ENCODE measurements at regions of chr18 and their contacts with region 1.

Region 1: DNA sequence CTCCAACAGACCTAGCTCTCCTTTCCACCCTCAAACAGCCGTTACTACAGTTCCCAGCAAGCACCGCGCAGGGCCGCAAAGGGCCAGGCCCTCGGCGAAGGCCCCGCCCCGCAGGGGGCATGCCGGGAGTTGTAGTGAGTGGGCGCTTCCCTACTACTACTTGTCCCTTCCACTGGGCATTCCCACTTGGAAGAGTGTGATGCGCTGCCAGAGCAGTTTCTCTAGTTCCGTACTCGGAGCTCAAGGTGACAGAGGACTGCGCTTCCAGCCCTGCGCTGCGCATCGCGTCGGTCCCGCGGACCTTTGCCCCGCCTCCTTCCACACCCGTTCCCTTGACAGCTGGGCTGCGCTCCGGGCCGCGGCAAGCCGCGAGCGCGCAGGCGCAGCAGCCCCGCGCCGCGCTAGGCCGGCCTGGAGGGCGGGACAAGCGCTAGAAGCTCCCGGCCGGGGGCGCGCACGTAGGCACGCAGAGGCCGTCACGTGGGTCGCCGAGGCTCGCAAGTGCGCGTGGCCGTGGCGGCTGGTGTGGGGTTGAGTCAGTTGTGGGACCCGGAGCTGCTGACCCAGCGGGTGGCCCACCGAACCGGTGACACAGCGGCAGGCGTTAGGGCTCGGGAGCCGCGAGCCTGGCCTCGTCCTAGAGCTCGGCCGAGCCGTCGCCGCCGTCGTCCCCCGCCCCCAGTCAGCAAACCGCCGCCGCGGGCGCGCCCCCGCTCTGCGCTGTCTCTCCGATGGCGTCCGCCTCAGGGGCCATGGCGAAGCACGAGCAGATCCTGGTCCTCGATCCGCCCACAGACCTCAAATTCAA is at the start of gene VAPA:
- DNase-seq: peak; percentile 86 to 99 (median 93)
- ATAC-seq: peak; percentile 82
- H3K4me3 ChIP-seq: peak within 1 kb of the TSS; percentile 82 to 99
- H3K4me3 Mint-ChIP-seq: peak within 1 kb of the TSS; percentile 92
- H3K27ac ChIP-seq: peak within 1 kb of the TSS; percentile 88 to 94
- H3K27ac Mint-ChIP-seq: peak within 1 kb of the TSS; percentile 96
- H3K4me1 ChIP-seq: peaks cover 41% of the 10 kb centered on the region
- H3K4me1 Mint-ChIP-seq: peaks cover 26% of the 10 kb centered on the region
- H3K27me3 ChIP-seq: no peaks in the 10 kb centered on the region
- H3K27me3 Mint-ChIP-seq: no peaks in the 10 kb centered on the region
- CTCF ChIP-seq: no peak
- total RNA-seq, gene VAPA: 169 to 177 TPM

Region 2: DNA sequence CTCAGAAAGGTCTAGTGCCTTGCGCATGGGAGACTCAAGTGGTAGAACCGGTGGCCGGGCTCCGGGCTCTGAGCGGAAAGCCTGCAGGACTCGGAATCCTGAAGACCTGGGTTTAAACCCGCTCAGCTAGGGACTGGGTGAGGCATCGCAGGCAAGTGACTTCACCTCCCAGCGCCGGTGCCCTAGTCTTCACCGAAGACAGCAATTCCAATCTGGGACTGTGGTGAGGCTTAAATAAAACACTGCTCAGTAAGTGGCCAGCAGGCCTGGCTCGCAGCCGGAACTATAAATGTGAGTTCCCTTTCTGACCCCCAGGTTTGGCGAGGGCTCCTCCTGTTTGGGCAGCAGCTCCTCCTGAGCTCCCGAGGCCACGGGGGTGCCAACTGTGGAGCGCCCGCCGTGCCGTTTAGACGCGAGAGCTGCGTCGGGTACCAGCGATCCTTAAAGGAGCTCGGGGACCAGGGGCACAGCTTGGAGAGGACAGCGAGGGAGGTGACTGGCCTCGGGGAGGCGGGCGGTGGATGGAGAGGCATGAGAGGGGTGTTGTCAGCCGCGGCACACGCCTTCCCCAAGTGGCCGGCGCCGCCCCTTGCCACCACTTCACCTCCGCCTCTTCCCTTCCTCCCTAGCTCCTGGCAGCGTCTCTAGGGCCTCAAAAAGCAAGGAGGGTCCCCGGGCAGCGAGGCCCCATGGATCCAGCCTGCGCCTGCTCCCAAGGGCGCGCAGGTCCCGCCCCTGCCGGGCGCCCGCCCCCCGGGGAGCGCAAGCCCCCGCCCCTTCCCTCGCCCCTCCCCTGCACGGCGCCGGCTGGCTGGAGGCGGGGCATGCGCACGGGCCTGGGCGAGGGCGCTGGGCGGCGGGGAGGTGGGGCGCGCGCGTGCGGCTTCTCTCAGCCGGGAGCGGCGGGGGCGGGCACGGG is 1209.1 kb before region 1 on chr18:
- CTCF ChIA-PET with region 1: no interaction called
- POLR2A ChIA-PET with region 1: no interaction called
- intact Hi-C with region 1: loop called (anchors 10 kb)
- DNase-seq: peak; percentile 59 to 91 (median 84)
- ATAC-seq: peak; percentile 95
- H3K4me3 ChIP-seq: peak overlapping the region; percentile 73
- H3K4me3 Mint-ChIP-seq: peak overlapping the region; percentile 89
- H3K27ac ChIP-seq: no peak overlapping the region
- H3K27ac Mint-ChIP-seq: no peak overlapping the region
- H3K4me1 ChIP-seq: peaks cover 15% of the 10 kb centered on the region
- H3K4me1 Mint-ChIP-seq: peaks cover 17% of the 10 kb centered on the region
- H3K27me3 ChIP-seq: peaks cover 16 to 24% of the 10 kb centered on the region in 2 experiments
- H3K27me3 Mint-ChIP-seq: peaks cover 62% of the 10 kb centered on the region
- CTCF ChIP-seq: no peak

Region 3: GRCh38 chr18:9260388-9261380 is 653.0 kb before region 1 on chr18:
- CTCF ChIA-PET with region 1: no interaction called
- POLR2A ChIA-PET with region 1: no interaction called
- intact Hi-C with region 1: no loop called
- DNase-seq: no peak
- ATAC-seq: no peak
- H3K4me3 ChIP-seq: no peak overlapping the region
- H3K4me3 Mint-ChIP-seq: no peak overlapping the region
- H3K27ac ChIP-seq: no peak overlapping the region
- H3K27ac Mint-ChIP-seq: peak overlapping the region; percentile 50
- H3K4me1 ChIP-seq: no peaks in the 10 kb centered on the region
- H3K4me1 Mint-ChIP-seq: peaks cover 10% of the 10 kb centered on the region
- H3K27me3 ChIP-seq: no peaks in the 10 kb centered on the region
- H3K27me3 Mint-ChIP-seq: no peaks in the 10 kb centered on the region
- CTCF ChIP-seq: no peak

Region 4: DNA sequence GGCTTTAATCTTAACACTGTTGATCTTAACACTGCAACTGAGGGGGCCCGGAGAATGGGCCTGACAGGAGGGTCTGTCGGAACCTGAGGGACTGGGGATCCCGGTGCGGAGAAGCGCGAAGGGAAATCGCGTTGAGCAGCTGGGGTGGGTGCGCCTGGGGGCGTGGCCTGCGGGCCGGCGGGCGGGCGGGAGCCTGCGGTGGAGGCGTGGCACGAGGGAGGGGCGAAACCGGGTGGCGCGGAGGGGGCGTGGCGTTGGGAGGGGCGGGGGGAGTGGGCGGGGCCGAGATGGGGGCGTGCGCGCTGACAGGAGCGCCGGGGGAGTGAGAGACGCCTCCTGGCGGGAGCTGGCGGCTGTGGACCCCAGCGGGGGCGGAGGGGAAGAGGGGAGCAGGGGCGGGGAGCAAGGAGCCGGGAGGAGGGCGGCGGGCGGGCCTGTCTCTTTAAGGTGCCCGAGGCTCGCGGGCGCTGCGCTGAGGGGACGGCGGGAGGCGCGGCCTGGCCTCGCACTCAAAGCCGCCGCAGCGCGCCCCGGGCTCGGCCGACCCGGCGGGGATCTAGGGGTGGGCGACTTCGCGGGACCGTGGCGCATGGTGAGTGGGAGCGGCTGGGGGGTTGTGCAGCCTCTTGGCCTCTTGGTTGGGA is 579.3 kb before region 1 on chr18 and contains the start of gene TWSG1:
- CTCF ChIA-PET with region 1: no interaction called
- POLR2A ChIA-PET with region 1: interaction called, 4 read pairs
- intact Hi-C with region 1: loop called in 1 of 2 experiments (anchors 2 kb)
- DNase-seq: peak; percentile 90 to 97 (median 94)
- ATAC-seq: peak; percentile 88
- H3K4me3 ChIP-seq: peak within 1 kb of the TSS; percentile 62 to 69
- H3K4me3 Mint-ChIP-seq: peak within 1 kb of the TSS; percentile 81
- H3K27ac ChIP-seq: peak within 1 kb of the TSS; percentile 61 to 67
- H3K27ac Mint-ChIP-seq: peak within 1 kb of the TSS; percentile 86
- H3K4me1 ChIP-seq: peaks cover 8% of the 10 kb centered on the region
- H3K4me1 Mint-ChIP-seq: peaks cover 27% of the 10 kb centered on the region
- H3K27me3 ChIP-seq: no peaks in the 10 kb centered on the region
- H3K27me3 Mint-ChIP-seq: no peaks in the 10 kb centered on the region
- CTCF ChIP-seq: peak; percentile 30
- total RNA-seq, gene TWSG1: 4.2 to 5.3 TPM

Region 5: DNA sequence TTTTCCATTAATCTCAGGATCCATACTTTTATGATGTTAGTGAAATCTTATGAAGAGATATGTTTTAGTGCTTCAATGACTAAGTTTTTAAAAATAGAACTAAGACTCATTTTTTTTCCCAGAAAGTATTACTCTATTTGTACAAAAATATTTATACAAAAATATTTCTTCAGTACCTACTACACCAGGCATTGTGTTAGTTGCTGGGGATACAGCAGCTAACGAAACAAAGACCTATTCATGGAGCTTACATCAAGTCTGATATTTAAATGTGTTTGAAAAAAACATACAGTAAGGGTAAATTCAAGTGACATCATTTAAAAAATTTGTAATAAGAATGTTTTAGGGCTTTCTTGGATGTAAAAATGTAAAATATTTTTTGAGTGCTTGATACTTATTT is 11.6 kb after region 1 on chr18:
- CTCF ChIA-PET with region 1: interaction called, 3 read pairs
- POLR2A ChIA-PET with region 1: interaction called, 22 read pairs
- intact Hi-C with region 1: loop called in 1 of 2 experiments (anchors 1 kb)
- DNase-seq: no peak
- ATAC-seq: no peak
- H3K4me3 ChIP-seq: no peak overlapping the region
- H3K4me3 Mint-ChIP-seq: no peak overlapping the region
- H3K27ac ChIP-seq: no peak overlapping the region
- H3K27ac Mint-ChIP-seq: no peak overlapping the region
- H3K4me1 ChIP-seq: peaks cover 88% of the 10 kb centered on the region
- H3K4me1 Mint-ChIP-seq: peaks cover 74% of the 10 kb centered on the region
- H3K27me3 ChIP-seq: no peaks in the 10 kb centered on the region
- H3K27me3 Mint-ChIP-seq: no peaks in the 10 kb centered on the region
- CTCF ChIP-seq: no peak

Region 6: GRCh38 chr18:10032331-10033015 is 118.7 kb after region 1 on chr18:
- CTCF ChIA-PET with region 1: no interaction called
- POLR2A ChIA-PET with region 1: interaction called, 3 read pairs
- intact Hi-C with region 1: loop called in 1 of 2 experiments (anchors 1 kb)
- DNase-seq: peak; percentile 14 to 80 (median 51)
- ATAC-seq: peak; percentile 97
- H3K4me3 ChIP-seq: peak overlapping the region; percentile 47 to 62
- H3K4me3 Mint-ChIP-seq: peak overlapping the region; percentile 85
- H3K27ac ChIP-seq: peak overlapping the region; percentile 59 to 62
- H3K27ac Mint-ChIP-seq: peak overlapping the region; percentile 93
- H3K4me1 ChIP-seq: peaks cover 12% of the 10 kb centered on the region
- H3K4me1 Mint-ChIP-seq: peaks cover 16% of the 10 kb centered on the region
- H3K27me3 ChIP-seq: no peaks in the 10 kb centered on the region
- H3K27me3 Mint-ChIP-seq: no peaks in the 10 kb centered on the region
- CTCF ChIP-seq: no peak

Region 7: GRCh38 chr18:11908182-11909060 is 1994.7 kb after region 1 on chr18 and contains the start of gene MPPE1:
- CTCF ChIA-PET with region 1: no interaction called
- POLR2A ChIA-PET with region 1: no interaction called
- intact Hi-C with region 1: loop called in 1 of 2 experiments (anchors 5 kb)
- DNase-seq: peak; percentile 69 to 93 (median 84)
- ATAC-seq: peak; percentile 90
- H3K4me3 ChIP-seq: peak within 1 kb of the TSS; percentile 85 to 100
- H3K4me3 Mint-ChIP-seq: peak within 1 kb of the TSS; percentile 96
- H3K27ac ChIP-seq: peak within 1 kb of the TSS; percentile 92 to 95
- H3K27ac Mint-ChIP-seq: peak within 1 kb of the TSS; percentile 96
- H3K4me1 ChIP-seq: peaks cover 11% of the 10 kb centered on the region
- H3K4me1 Mint-ChIP-seq: peaks cover 36% of the 10 kb centered on the region
- H3K27me3 ChIP-seq: no peaks in the 10 kb centered on the region
- H3K27me3 Mint-ChIP-seq: no peaks in the 10 kb centered on the region
- CTCF ChIP-seq: no peak
- total RNA-seq, gene MPPE1: 44.0 to 55.1 TPM